ENCODE measurements at regions of chr10 and their contacts with region 1.

Region 1: GRCh38 chr10:88932539-88933256 is 19.9 kb downstream of the ACTA2 start:
- DNase-seq: no peak
- ATAC-seq: peak; percentile 76
- H3K4me3 Mint-ChIP-seq: no peak overlapping the region
- H3K27ac Mint-ChIP-seq: peak overlapping the region; percentile 64
- H3K4me1 Mint-ChIP-seq: peaks cover 32% of the 10 kb centered on the region
- H3K27me3 Mint-ChIP-seq: no peaks in the 10 kb centered on the region
- CTCF ChIP-seq: peak; percentile 86

Region 2: DNA sequence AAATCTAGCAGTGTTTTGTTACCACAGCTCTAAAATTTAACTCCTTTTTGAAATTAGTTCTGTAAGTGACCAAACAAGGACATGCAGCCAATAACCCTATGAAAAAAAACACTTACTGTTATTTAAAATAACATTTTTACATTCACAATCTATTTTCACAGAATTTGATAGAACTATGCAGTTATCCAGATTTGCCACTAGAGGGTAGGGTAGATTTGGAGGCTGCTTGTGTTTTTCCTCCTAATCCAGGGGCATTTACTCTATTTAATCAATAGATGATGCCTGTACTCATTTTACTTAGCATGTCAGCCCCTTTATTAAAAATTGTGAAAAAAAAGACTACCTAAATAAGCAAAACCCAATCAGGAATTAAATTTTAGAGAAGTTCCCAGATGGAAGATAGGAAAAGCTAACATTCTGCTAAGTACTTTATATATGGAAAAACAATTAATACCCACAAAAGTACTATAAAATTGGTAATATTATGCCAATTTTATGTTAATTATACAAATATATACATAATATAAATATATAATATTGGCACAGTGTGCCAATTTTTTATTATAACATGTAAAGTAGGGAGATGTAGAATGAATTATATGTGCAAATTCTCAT is 244.7 kb before region 1 on chr10:
- CTCF ChIA-PET with region 1: no interaction called
- POLR2A ChIA-PET with region 1: no interaction called
- intact Hi-C with region 1: loop called (anchors 5 kb)
- DNase-seq: no peak
- ATAC-seq: peak; percentile 58
- H3K4me3 Mint-ChIP-seq: no peak overlapping the region
- H3K27ac Mint-ChIP-seq: no peak overlapping the region
- H3K4me1 Mint-ChIP-seq: no peaks in the 10 kb centered on the region
- H3K27me3 Mint-ChIP-seq: peaks cover 10% of the 10 kb centered on the region
- CTCF ChIP-seq: peak; percentile 80

Region 3: DNA sequence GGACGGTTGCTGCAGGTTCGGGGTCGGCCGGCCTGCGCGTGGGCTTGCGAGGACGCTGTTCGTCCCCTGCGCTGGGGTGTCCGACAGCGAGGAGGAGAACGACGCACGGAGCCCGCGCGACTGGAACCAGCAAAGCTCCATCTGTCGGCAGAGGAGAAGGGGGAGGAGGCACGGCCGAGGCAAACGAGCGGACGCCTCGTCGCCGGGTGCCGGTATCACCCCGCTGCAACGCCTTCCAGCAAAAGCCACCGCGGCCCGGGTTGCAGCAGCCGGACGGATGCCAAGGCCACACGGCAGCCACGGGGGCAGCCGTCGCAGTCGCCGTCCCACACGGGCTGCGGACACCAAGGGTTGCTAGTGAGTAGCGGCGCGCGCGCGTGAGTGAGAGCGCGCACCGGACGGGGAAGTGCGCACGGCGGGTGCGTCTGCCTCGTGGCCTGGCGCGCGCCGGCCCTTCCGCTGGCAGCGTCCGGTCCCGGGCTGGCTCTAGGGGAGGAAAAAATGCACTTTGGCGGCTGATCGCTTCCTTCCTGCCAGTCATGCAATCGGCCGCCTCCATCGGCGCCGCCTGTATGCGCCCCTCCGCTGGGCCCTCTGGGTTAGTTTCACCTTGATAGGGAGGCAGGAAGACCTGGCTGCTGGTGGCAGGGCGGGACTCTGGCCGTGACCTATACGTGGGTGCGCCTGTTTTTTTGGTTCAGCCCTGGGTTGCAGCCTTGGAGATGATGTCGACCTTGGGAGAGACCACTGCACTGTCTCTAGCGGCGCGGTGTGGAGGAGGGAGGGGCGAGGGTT is 52.2 kb before region 1 on chr10:
- CTCF ChIA-PET with region 1: interaction called, 12 read pairs
- POLR2A ChIA-PET with region 1: interaction called, 33 read pairs
- intact Hi-C with region 1: loop called (anchors 1 kb)
- DNase-seq: peak; percentile 77
- ATAC-seq: peak; percentile 71
- H3K4me3 Mint-ChIP-seq: peak overlapping the region; percentile 96
- H3K27ac Mint-ChIP-seq: peak overlapping the region; percentile 99
- H3K4me1 Mint-ChIP-seq: peaks cover 52% of the 10 kb centered on the region
- H3K27me3 Mint-ChIP-seq: no peaks in the 10 kb centered on the region
- CTCF ChIP-seq: no peak

Region 4: DNA sequence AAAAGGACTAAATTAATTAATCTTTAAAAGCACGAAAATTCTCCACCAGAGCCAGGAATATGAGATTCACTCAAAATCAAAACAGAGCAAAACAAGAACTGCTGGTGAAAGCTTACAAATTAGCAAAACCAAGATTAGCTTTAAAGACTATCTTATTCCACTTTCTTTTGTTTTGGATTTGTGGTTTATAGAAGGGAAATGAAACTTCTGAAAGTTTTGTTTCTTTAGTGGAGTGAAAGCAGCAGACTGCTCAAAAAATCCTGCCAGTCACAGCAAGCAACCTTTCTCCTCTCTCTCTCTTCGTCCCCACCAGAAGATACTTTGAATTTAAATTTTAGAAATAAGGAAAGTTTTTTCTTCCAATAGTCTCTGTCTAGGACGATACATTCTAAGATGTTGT is 12.1 kb after region 1 on chr10:
- CTCF ChIA-PET with region 1: interaction called, 47 read pairs
- POLR2A ChIA-PET with region 1: no interaction called
- intact Hi-C with region 1: loop called (anchors 1 kb)
- DNase-seq: no peak
- ATAC-seq: peak; percentile 34
- H3K4me3 Mint-ChIP-seq: no peak overlapping the region
- H3K27ac Mint-ChIP-seq: no peak overlapping the region
- H3K4me1 Mint-ChIP-seq: peaks cover 17% of the 10 kb centered on the region
- H3K27me3 Mint-ChIP-seq: no peaks in the 10 kb centered on the region
- CTCF ChIP-seq: no peak

Region 5: DNA sequence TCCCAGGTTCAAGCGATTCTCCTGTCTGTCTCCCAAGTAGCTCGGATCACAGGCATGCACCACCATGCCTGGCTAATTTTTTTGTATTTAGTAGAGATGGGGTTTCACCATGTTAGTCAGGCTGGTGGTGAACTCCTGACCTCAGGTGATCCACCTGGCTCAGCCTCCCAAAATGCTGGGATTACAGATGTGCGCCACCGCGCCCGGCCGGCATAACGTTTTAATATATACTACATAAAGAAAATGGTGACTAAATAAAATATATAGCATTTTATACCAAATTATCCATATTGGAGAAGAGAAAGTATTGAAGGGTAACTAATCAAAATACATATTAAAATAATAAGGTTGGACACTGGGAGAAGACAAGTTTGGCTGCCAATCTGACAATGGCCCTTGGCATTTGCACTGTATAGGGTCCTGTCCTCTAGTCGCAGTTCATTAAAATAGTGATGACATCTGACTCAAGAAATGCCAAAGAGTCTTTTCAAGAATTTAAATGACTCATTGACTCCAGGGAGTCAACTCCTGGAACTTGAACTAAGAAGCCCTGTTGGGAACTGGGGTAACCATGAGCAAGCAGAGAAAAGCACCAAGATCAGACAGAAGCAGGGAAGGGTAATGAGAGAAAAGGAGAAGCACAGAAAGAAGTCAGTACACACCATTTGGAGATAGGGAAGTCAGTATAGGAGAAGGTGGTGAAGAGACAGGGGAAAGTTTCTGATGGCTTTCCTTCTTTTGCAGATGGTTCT is 183.4 kb after region 1 on chr10:
- CTCF ChIA-PET with region 1: no interaction called
- POLR2A ChIA-PET with region 1: no interaction called
- intact Hi-C with region 1: loop called (anchors 1 kb)
- DNase-seq: no peak
- ATAC-seq: no peak
- H3K4me3 Mint-ChIP-seq: no peak overlapping the region
- H3K27ac Mint-ChIP-seq: no peak overlapping the region
- H3K4me1 Mint-ChIP-seq: no peaks in the 10 kb centered on the region
- H3K27me3 Mint-ChIP-seq: peaks cover 17% of the 10 kb centered on the region
- CTCF ChIP-seq: no peak

Region 6: DNA sequence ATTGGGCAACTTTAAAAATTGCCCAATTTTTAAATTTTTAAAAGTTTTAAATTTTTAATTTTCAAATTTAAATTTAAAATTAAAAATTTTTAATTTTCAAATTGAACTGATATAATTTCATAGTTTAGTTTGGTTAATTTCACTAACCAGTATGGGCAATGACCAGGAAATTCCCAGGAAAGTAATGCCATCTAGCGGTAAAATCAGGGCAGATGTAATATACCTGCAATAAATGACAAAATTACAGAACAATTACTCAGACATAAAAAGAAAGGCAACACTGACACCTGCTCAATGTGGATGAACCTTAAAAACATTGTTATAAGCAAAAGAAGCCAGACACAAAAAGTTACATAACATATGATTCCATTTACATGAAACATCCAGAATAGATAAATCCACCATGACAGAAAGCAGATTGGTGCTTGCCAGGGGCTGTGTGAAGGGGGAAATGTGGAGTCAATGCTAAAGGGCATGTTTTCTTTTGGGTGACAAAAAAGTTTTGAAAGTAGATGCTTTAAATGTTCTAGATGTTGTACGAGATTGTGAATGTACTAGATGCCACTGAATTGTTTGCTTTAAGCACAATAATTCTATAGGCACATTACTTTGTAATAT is 631.3 kb after region 1 on chr10:
- CTCF ChIA-PET with region 1: no interaction called
- POLR2A ChIA-PET with region 1: no interaction called
- intact Hi-C with region 1: loop called (anchors 10 kb)
- DNase-seq: no peak
- ATAC-seq: peak; percentile 57
- H3K4me3 Mint-ChIP-seq: no peak overlapping the region
- H3K27ac Mint-ChIP-seq: no peak overlapping the region
- H3K4me1 Mint-ChIP-seq: no peaks in the 10 kb centered on the region
- H3K27me3 Mint-ChIP-seq: peaks cover 14% of the 10 kb centered on the region
- CTCF ChIP-seq: no peak

Measured in activated B cell treated with CpG ODN at 0.5 μM for 24 hours (primary cell).